Psoas muscle (tissue), 8 donors: ENCODE measurements at regions of chr10 and their contacts with region 1.

Region 1: DNA sequence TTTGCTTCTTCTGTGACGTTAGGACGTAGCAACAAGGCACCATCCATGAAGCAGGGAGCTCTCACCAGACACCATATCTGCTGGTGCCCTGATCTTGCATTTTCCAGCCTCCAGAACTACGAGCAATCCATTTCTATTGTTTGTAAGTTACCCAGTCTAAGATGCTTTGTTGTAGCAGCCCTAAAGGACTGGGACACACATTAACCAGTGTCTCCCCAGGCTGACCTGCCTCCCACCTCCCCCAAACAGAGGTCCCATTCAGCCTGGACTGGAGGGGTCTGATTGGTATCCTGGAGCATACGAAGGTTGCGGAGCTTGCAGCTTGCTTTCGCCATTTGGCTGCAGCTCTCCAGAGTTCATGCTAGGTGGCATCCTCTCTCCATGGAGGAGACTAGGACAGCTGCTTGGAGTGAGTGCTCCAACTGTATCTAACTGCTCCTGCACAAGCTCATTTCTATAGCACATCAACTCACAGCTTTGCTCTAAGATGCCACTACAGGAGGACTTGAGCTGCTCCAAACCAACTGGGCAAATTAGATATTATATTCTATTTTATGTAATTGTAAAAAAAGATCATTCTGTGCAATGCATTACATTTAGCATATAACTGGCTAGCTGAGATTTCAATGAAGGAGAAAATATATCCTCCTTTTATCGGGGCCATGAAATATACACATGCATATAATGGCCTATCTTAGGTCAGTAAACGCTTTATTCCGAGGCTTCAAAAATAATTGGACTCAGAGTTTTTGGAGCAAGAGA is 8.0 kb upstream of the GRK5 start:
- DNase-seq: peak in 1 of 2 donors; percentile 60
- ATAC-seq: peak; percentile 90 to 97 (median 92)
- H3K4me3 ChIP-seq: no peak overlapping the region
- H3K27ac ChIP-seq: no peak overlapping the region
- H3K4me1 ChIP-seq: no peaks in the 10 kb centered on the region
- H3K27me3 ChIP-seq: no peaks in the 10 kb centered on the region
- CTCF ChIP-seq: peak; percentile 76

Region 2: DNA sequence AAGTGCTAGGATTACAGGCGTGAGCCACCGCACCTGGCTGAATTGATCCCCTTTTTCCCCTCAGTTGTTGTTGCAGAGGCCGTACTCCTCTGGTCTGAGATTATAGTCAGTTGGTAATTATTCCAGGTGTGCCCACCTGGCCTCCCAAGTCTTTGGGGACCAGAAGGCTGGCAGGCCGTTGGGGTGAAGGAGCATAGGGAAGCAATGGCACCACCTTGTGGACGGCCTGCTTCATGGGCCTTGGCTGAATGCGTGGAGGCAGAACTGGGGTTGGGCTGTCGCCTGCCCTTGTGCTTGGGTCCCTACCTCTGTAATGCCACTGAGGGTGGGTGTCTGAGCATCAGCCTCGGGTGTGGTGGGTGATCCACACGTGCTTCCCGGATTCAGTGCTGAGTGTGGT is 217.4 kb after region 1 on chr10:
- intact Hi-C with region 1: loop called (anchors 1 to 5 kb)
- DNase-seq: peak; percentile 54 to 77
- ATAC-seq: peak; percentile 64 to 76 (median 72)
- H3K4me3 ChIP-seq: no peak overlapping the region
- H3K27ac ChIP-seq: no peak overlapping the region
- H3K4me1 ChIP-seq: peaks cover 4% of the 10 kb centered on the region
- H3K27me3 ChIP-seq: no peaks in the 10 kb centered on the region
- CTCF ChIP-seq: peak; percentile 74

Region 3: GRCh38 chr10:119445311-119445934 is 246.0 kb after region 1 on chr10:
- intact Hi-C with region 1: loop called (anchors 2 kb)
- DNase-seq: peak; percentile 84 to 91
- ATAC-seq: peak; percentile 70 to 82 (median 78)
- H3K4me3 ChIP-seq: no peak overlapping the region
- H3K27ac ChIP-seq: no peak overlapping the region
- H3K4me1 ChIP-seq: no peaks in the 10 kb centered on the region
- H3K27me3 ChIP-seq: peaks cover 0 to 2% (median 0%) of the 10 kb centered on the region in 3 donors
- CTCF ChIP-seq: peak; percentile 96

Region 4: GRCh38 chr10:119542988-119543813 is 343.8 kb after region 1 on chr10:
- intact Hi-C with region 1: loop called in 1 of 2 experiments (anchors 5 kb)
- DNase-seq: peak; percentile 51 to 76
- ATAC-seq: peak; percentile 53 to 75 (median 73)
- H3K4me3 ChIP-seq: peak overlapping the region; percentile 82
- H3K27ac ChIP-seq: peak overlapping the region; percentile 65
- H3K4me1 ChIP-seq: no peaks in the 10 kb centered on the region
- H3K27me3 ChIP-seq: peaks cover 0 to 11% (median 4%) of the 10 kb centered on the region in 3 donors
- CTCF ChIP-seq: peak; percentile 39